B cell (primary cell): ENCODE measurements at regions of chr5 and their contacts with region 1.

Region 1: DNA sequence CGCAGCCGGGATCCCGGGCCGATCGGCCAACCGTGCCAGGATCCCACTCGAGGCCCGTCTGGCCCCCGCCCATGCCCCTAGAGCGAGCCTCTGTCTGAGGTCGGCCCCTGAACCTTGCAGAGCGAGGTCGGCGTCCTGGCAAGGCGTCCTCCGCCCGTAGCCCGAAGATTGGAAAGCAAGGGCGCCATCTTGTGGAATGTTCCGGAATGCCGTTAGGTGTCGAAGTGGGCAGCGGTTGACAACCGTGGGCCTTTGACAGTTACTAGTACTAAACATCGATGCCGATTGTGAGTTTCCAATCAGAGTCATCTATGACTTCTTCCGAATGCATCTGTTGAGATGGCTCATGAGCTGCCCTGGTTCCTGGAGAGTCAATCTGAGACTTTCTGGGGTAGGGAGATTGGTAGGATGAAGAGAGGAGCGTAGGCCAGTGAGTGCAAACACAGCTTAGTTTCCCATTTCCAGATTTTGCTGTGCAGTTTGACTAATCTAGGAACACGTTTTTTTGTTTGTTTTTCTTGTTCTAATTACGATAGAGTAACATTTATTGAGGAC is 923 bp upstream of the PLK2 start:
- DNase-seq: peak; percentile 93
- ATAC-seq: peak; percentile 60
- H3K4me3 ChIP-seq: peak overlapping the region in 4 of 5 experiments; percentile 67 to 88 (median 78)
- H3K4me3 Mint-ChIP-seq: peak overlapping the region; percentile 87
- H3K27ac ChIP-seq: peak overlapping the region; percentile 87 to 93
- H3K27ac Mint-ChIP-seq: peak overlapping the region; percentile 93
- H3K4me1 ChIP-seq: peaks cover 10 to 13% of the 10 kb centered on the region in 2 donors
- H3K4me1 Mint-ChIP-seq: peaks cover 13% of the 10 kb centered on the region
- H3K27me3 ChIP-seq: peaks cover 0 to 7% (median 3%) of the 10 kb centered on the region in 4 experiments
- H3K27me3 Mint-ChIP-seq: peaks cover 3% of the 10 kb centered on the region
- CTCF ChIP-seq: peak; percentile 83

Region 2: GRCh38 chr5:56909294-56910209 is 1551.3 kb before region 1 on chr5 and contains the start of gene SETD9:
- CTCF ChIA-PET with region 1: no interaction called
- POLR2A ChIA-PET with region 1: no interaction called
- intact Hi-C with region 1: loop called (anchors 1 kb)
- DNase-seq: peak; percentile 94
- ATAC-seq: peak; percentile 83
- H3K4me3 ChIP-seq: peak within 1 kb of the TSS; percentile 88 to 99 (median 97)
- H3K4me3 Mint-ChIP-seq: peak within 1 kb of the TSS; percentile 93
- H3K27ac ChIP-seq: peak within 1 kb of the TSS; percentile 78 to 93
- H3K27ac Mint-ChIP-seq: peak within 1 kb of the TSS; percentile 91
- H3K4me1 ChIP-seq: peaks cover 12 to 22% of the 10 kb centered on the region in 2 donors
- H3K4me1 Mint-ChIP-seq: peaks cover 21% of the 10 kb centered on the region
- H3K27me3 ChIP-seq: no peaks in the 10 kb centered on the region
- H3K27me3 Mint-ChIP-seq: no peaks in the 10 kb centered on the region
- CTCF ChIP-seq: no peak
- total RNA-seq, gene SETD9: 7.2 and 9.5 TPM in 2 replicates

Region 3: DNA sequence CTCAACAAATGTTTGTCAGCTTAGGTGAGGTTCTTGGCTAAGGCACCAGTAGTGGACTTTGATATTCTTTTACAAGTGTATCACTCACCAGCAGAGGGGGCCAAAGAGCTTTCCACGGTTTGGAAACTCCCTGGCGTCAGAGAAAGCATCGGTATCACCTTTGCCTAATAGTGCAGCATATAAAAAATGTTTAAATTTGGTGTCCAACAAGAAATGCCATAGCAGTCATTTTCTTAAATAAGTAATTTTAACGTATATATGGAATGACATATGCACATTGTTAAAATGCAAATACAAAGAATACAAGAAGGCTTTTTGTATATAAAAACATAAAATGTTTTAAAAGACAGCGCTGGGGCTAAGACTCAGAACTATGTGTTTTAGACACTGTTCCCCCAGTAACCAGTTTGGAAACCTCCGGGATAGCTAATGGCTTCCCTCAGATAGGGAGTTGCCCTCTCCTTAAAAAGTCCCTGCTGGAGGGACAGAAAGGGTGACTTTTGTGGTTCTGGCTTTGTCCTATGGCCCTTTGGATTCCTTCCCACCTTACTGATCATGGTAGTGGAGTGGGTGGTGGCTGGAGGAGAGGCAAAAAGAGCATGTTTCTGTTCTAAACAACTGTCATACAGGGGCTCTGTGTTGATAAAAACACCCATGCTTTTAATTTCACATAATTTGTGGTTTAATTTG is 1162.4 kb before region 1 on chr5:
- CTCF ChIA-PET with region 1: interaction called, 93 read pairs
- POLR2A ChIA-PET with region 1: no interaction called
- intact Hi-C with region 1: loop called (anchors 1 kb)
- DNase-seq: peak; percentile 88
- ATAC-seq: peak; percentile 82
- H3K4me3 ChIP-seq: peak overlapping the region in 4 of 5 experiments; percentile 47 to 59 (median 51)
- H3K4me3 Mint-ChIP-seq: peak overlapping the region; percentile 76
- H3K27ac ChIP-seq: no peak overlapping the region
- H3K27ac Mint-ChIP-seq: peak overlapping the region; percentile 28
- H3K4me1 ChIP-seq: peaks cover 6 to 13% of the 10 kb centered on the region in 2 donors
- H3K4me1 Mint-ChIP-seq: peaks cover 16% of the 10 kb centered on the region
- H3K27me3 ChIP-seq: no peaks in the 10 kb centered on the region
- H3K27me3 Mint-ChIP-seq: no peaks in the 10 kb centered on the region
- CTCF ChIP-seq: peak; percentile 75

Region 4: GRCh38 chr5:57650360-57651069 is 810.3 kb before region 1 on chr5:
- CTCF ChIA-PET with region 1: interaction called, 48 read pairs
- POLR2A ChIA-PET with region 1: no interaction called
- intact Hi-C with region 1: no loop called
- DNase-seq: peak; percentile 28
- ATAC-seq: no peak
- H3K4me3 ChIP-seq: no peak overlapping the region
- H3K4me3 Mint-ChIP-seq: no peak overlapping the region
- H3K27ac ChIP-seq: no peak overlapping the region
- H3K27ac Mint-ChIP-seq: no peak overlapping the region
- H3K4me1 ChIP-seq: no peaks in the 10 kb centered on the region
- H3K4me1 Mint-ChIP-seq: no peaks in the 10 kb centered on the region
- H3K27me3 ChIP-seq: no peaks in the 10 kb centered on the region
- H3K27me3 Mint-ChIP-seq: peaks cover 15% of the 10 kb centered on the region
- CTCF ChIP-seq: peak; percentile 66

Region 5: DNA sequence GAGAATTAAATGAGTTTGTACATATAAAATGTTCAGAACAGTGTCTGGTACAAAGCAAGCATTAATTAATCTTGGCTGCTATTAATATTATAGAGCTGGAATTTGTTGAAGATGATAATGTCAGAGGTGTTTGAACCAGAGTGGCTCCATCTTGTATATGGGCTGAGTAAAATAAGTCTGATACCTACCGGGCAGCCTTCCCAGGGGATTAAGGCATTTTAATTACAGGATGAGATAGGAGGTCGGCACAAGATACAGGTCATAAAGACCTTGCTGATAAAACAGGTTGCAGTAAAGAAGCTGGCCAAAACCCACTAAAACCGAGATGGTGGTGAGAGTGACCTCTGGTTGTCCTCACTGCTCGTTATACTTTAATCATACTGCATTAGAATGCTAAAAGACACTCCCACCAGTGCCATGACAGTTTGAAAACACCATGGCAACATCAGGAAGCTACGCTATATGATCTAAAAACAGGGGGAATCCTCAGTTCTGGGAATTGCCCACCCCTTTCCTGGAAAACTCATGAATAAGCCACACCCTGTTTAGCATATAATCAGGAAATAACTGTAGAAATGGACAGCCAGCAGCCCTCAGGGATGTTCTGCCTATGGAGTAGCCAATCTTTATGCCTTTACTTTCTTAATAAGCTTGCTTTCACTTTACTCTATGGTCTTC is 91.2 kb before region 1 on chr5:
- CTCF ChIA-PET with region 1: no interaction called
- POLR2A ChIA-PET with region 1: no interaction called
- intact Hi-C with region 1: no loop called
- DNase-seq: no peak
- ATAC-seq: no peak
- H3K4me3 ChIP-seq: no peak overlapping the region
- H3K4me3 Mint-ChIP-seq: no peak overlapping the region
- H3K27ac ChIP-seq: no peak overlapping the region
- H3K27ac Mint-ChIP-seq: no peak overlapping the region
- H3K4me1 ChIP-seq: no peaks in the 10 kb centered on the region
- H3K4me1 Mint-ChIP-seq: no peaks in the 10 kb centered on the region
- H3K27me3 ChIP-seq: no peaks in the 10 kb centered on the region
- H3K27me3 Mint-ChIP-seq: peaks cover 2% of the 10 kb centered on the region
- CTCF ChIP-seq: no peak

Region 6: GRCh38 chr5:58477760-58478376 is 17.1 kb after region 1 on chr5:
- CTCF ChIA-PET with region 1: interaction called, 40 read pairs
- POLR2A ChIA-PET with region 1: no interaction called
- intact Hi-C with region 1: no loop called
- DNase-seq: peak; percentile 59
- ATAC-seq: no peak
- H3K4me3 ChIP-seq: peak overlapping the region in 1 of 5 experiments; percentile 18
- H3K4me3 Mint-ChIP-seq: peak overlapping the region; percentile 14
- H3K27ac ChIP-seq: no peak overlapping the region
- H3K27ac Mint-ChIP-seq: no peak overlapping the region
- H3K4me1 ChIP-seq: peaks cover 15 to 21% of the 10 kb centered on the region in 2 donors
- H3K4me1 Mint-ChIP-seq: peaks cover 20% of the 10 kb centered on the region
- H3K27me3 ChIP-seq: no peaks in the 10 kb centered on the region
- H3K27me3 Mint-ChIP-seq: no peaks in the 10 kb centered on the region
- CTCF ChIP-seq: peak; percentile 76

Region 7: GRCh38 chr5:58505971-58506640 is 45.3 kb after region 1 on chr5:
- CTCF ChIA-PET with region 1: interaction called, 13 read pairs
- POLR2A ChIA-PET with region 1: no interaction called
- intact Hi-C with region 1: no loop called
- DNase-seq: peak; percentile 55
- ATAC-seq: peak; percentile 92
- H3K4me3 ChIP-seq: peak overlapping the region in 4 of 5 experiments; percentile 12 to 57 (median 18)
- H3K4me3 Mint-ChIP-seq: peak overlapping the region; percentile 64
- H3K27ac ChIP-seq: peak overlapping the region; percentile 47 to 61
- H3K27ac Mint-ChIP-seq: peak overlapping the region; percentile 81
- H3K4me1 ChIP-seq: peaks cover 62 to 63% of the 10 kb centered on the region in 2 donors
- H3K4me1 Mint-ChIP-seq: peaks cover 76% of the 10 kb centered on the region
- H3K27me3 ChIP-seq: no peaks in the 10 kb centered on the region
- H3K27me3 Mint-ChIP-seq: no peaks in the 10 kb centered on the region
- CTCF ChIP-seq: no peak

Region 8: GRCh38 chr5:58849921-58850667 is 389.3 kb after region 1 on chr5:
- CTCF ChIA-PET with region 1: interaction called, 26 read pairs
- POLR2A ChIA-PET with region 1: no interaction called
- intact Hi-C with region 1: loop called (anchors 5 kb)
- DNase-seq: peak; percentile 67
- ATAC-seq: peak; percentile 78
- H3K4me3 ChIP-seq: no peak overlapping the region
- H3K4me3 Mint-ChIP-seq: no peak overlapping the region
- H3K27ac ChIP-seq: no peak overlapping the region
- H3K27ac Mint-ChIP-seq: no peak overlapping the region
- H3K4me1 ChIP-seq: no peaks in the 10 kb centered on the region
- H3K4me1 Mint-ChIP-seq: no peaks in the 10 kb centered on the region
- H3K27me3 ChIP-seq: no peaks in the 10 kb centered on the region
- H3K27me3 Mint-ChIP-seq: peaks cover 3% of the 10 kb centered on the region
- CTCF ChIP-seq: peak; percentile 78